Posterior vena cava (tissue), 2 donors: ENCODE measurements at regions of chr4 and their contacts with region 1.

Region 1: GRCh38 chr4:154399259-154399974 is 92.2 kb downstream of the DCHS2 start:
- DNase-seq: no peak

Region 2: GRCh38 chr4:154435895-154436294 is 36.5 kb after region 1 on chr4:
- intact Hi-C with region 1: no loop called
- DNase-seq: no peak

Region 3: GRCh38 chr4:154506253-154506652 is 106.8 kb after region 1 on chr4:
- intact Hi-C with region 1: loop called (anchors 2 to 10 kb)
- DNase-seq: no peak